Cardiac septum (tissue), 1 donor: ENCODE measurements at regions of chr15 and their contacts with region 1.

Region 1: DNA sequence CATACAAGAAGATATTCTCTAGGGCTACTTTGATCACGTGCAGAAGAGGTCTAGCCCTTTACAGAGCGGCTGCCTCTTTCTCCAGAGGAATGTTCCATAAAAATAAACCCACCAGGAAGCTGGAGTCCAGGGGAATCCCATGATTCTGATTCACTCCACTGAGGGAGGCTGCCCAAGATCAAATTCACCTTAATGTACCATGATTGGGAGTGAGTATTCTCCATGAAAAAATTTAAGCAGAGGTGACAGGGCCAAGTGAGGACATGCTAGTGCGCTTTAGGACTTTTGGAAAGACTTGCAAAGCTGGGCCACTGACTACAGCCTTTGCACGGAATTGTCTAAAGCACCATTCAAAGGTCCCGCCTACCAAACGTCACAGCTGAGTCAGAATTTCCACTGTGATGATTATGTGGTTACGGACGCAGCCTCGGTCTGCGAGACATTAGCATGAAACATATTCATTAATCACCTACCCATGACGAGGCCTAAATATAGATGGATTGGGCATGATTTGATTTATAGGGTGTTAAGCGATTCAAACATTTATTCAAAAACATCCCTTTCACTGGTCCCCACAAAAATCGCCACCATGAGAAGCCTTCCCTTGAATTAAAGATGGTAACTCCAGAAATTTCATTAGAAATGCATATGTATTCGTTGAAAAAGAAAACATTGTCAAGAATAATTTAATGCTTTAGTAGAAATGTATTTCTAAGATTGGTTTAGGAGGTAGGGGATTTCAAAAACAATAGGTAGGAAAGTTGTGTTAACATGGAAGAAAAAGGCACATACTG is 152.6 kb downstream of the GREM1 start:
- DNase-seq: no peak

Region 2: DNA sequence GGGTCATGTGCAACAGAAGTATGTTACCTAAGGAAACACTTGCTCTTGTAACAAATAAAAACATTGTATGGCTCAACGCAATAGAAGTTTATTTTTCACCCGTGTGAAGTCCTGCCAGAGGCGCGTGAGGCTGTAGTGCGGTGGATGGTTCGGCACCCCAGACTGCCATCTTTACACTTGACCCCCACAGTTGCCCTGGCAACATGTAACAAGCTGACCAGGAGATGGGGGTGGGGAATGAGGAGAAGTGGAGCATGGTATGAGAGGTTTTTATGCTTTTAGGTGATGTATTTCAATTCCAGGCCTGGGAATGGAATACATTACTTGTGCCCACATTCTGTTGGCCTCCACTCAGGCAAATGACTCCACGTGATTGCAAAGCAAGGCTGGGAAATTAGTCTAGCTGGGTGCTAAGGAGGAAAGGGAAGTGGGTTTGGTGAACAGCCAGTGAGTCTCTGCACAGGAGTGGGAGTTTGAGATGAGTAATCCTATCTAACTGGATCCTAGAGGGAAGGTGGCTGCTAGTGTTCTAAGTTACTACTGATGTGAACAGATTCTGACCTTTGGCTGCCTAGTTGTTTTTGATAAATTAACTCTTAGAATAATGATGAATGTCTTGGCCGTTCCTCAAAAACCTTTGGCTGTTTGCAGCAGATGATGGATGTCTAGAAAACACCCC is 186.4 kb before region 1 on chr15:
- intact Hi-C with region 1: loop called (anchors 10 kb)
- DNase-seq: no peak

Region 3: GRCh38 chr15:32774022-32774421 is 96.4 kb before region 1 on chr15:
- intact Hi-C with region 1: no loop called
- DNase-seq: no peak

Region 4: DNA sequence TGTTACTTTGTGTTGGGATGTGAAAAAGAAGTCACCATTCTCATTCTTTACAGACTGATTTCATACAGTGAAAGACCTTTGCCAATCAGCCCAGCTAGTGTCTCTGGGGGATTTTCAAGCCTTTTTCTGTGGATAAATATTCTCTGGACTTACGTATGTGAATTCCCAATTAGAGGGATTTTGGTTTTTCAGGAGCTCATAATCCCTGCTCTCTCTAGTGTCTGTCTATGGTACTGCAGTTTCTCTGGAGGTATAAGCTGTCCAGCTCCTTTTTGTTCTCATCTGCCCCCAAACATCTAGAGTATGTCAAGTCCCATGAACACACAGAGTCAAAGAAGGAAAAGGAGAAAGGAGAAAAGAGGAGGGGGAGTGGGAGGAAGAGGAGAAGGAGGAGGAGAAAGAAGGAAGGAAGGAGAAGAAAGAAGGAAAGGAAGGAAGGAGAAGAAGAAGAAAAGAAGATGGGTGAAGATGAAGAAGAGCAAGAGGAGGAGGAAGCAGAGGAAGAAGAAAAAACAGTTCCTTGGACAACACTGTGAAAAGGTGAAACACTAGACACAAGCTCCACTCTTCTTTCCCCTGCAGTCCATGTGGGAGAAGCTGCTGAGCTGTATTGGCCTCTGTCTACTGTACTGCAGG is 66.0 kb after region 1 on chr15:
- intact Hi-C with region 1: loop called (anchors 10 kb)
- DNase-seq: no peak